GM10248 (cell line): ENCODE measurements at regions of chr4 and their contacts with region 1.

Region 1: GRCh38 chr4:40289366-40290188 is 45.6 kb upstream of the CHRNA9 start:
- DNase-seq: no peak
- CTCF ChIP-seq: no peak

Region 2: GRCh38 chr4:40275065-40275730 is 14.4 kb before region 1 on chr4:
- CTCF ChIA-PET with region 1: interaction called, 13 read pairs
- POLR2A ChIA-PET with region 1: no interaction called
- DNase-seq: no peak
- CTCF ChIP-seq: no peak

Region 3: GRCh38 chr4:40301603-40302002 is 12.0 kb after region 1 on chr4:
- CTCF ChIA-PET with region 1: no interaction called
- POLR2A ChIA-PET with region 1: no interaction called
- DNase-seq: peak; percentile 63
- CTCF ChIP-seq: peak; percentile 3